Right ventricle myocardium inferior (tissue), 1 donor: ENCODE measurements at regions of chr15 and their contacts with region 1.

Region 1: GRCh38 chr15:74127260-74127953 is 3.0 kb upstream of the ISLR2 start:
- DNase-seq: peak; percentile 93
- ATAC-seq: peak; percentile 97

Region 2: GRCh38 chr15:74245342-74245931 is 118.0 kb after region 1 on chr15:
- intact Hi-C with region 1: no loop called
- DNase-seq: peak; percentile 58
- ATAC-seq: no peak

Region 3: GRCh38 chr15:74302821-74303359 is 175.5 kb after region 1 on chr15:
- intact Hi-C with region 1: loop called (anchors 1 kb)
- DNase-seq: peak; percentile 59
- ATAC-seq: peak; percentile 53

Region 4: DNA sequence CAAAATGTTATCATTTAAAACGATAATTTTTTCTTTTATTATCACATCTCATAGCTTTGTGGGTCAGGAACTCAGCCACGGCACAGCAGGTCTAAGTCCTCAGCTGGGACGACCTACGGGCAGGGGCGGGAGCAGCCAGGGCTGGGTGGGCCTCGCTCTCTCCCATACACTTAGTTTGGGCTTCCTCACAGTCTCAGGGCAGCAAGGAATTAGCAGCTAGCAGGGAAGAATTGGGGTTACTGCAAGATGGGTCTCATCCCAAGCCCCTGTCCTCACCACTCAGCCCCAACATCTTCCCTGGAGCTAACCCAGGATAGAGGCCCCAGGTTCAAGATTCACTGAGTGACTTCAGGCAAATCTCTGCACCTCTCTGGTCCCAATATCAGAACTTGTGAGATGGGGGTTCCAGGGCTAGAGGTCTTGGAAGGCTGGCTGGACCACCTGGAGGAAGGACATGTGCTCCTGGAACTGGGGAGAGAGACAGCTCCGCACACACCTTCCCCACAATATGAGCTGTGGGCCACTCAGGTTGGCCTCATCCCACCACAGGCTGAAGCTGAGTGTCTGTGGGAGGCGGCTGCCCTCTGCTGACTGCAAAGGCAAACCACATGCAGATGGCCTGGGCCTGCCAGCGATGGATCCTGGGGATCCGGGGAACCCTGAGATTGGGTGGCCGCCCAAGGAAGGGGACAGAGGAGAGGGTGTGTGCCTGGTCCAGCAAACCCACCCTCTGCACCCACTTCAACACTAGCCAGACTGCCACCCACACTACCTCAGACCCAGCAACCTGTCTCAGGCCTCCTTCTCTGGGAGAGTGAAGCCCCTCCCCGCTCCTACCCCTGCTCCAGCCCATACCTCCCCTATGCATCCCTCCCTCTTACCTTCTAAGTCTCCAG is 195.0 kb after region 1 on chr15:
- intact Hi-C with region 1: loop called (anchors 1 kb)
- DNase-seq: peak; percentile 78
- ATAC-seq: peak; percentile 52